Transverse colon (tissue), 4 donors: ENCODE measurements at regions of chr3 and their contacts with region 1.

Region 1: DNA sequence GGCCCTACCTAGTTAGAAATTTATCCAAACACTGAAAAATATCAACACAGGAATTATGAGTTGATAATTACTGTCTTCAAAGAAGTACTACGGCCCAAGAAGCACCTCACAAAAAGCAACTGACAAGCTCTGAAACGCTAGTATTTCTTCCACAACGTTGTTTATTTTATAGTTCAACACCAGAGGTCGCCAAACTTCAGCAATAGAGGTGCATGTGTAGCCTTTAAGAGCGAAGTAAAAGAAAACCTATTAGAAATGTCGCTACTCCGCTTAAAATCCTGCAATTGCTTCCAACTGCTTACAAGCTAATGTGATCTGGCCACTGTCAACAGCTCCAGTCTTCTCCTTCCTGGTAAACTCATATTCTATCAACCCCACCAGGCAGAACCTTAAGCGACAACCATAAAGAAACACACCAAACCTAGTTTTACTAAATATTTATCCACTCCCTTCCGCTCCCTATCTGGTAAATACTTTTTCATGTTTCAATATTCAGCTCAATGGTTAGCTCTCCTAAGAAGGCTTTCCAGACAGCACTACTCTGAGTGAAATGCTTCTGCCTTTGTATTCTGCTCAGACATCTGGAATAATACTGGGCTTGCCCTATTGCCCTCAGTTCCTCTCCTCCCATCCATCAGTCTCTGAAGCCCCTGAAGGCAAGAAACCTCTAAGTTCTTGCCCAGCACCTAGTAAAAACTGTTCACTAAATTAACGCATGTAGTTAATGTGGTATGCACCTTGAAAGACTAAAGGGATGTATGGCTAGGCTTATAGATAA is 110.2 kb downstream of the NR1I2 start:
- DNase-seq: peak; percentile 15
- H3K4me3 ChIP-seq: no peak overlapping the region
- H3K27ac ChIP-seq: peak overlapping the region in 3 of 4 donors; percentile 18 to 31 (median 23)
- H3K4me1 ChIP-seq: peaks cover 0 to 10% (median 0%) of the 10 kb centered on the region in 4 donors
- H3K27me3 ChIP-seq: no peaks in the 10 kb centered on the region
- CTCF ChIP-seq: peak; percentile 59 to 67 (median 64)
- EP300 ChIP-seq: no peak
- POLR2A ChIP-seq: no peak

Region 2: DNA sequence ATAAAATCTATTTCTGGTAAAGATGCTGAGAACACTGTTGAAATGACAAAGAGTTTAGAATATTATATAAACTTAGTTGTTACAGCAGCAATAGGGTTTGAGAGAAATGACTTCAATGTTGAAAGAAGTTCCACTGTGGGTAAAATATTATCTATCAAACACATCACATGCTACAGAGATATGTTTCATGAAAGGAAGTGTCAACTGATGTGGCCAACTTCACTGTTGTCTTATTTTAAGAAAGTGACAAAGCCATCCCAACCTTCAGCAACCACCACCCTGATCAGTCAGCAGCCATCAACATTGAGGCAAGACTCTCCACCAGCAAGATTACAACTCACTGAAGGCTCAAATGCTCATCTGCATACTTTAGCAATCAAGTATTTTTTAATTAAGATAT is 449.0 kb before region 1 on chr3:
- in situ Hi-C with region 1: no loop called
- intact Hi-C with region 1: no loop called
- DNase-seq: no peak
- H3K4me3 ChIP-seq: no peak overlapping the region
- H3K27ac ChIP-seq: no peak overlapping the region
- H3K4me1 ChIP-seq: no peaks in the 10 kb centered on the region
- H3K27me3 ChIP-seq: no peaks in the 10 kb centered on the region
- CTCF ChIP-seq: no peak
- EP300 ChIP-seq: no peak
- POLR2A ChIP-seq: no peak

Region 3: DNA sequence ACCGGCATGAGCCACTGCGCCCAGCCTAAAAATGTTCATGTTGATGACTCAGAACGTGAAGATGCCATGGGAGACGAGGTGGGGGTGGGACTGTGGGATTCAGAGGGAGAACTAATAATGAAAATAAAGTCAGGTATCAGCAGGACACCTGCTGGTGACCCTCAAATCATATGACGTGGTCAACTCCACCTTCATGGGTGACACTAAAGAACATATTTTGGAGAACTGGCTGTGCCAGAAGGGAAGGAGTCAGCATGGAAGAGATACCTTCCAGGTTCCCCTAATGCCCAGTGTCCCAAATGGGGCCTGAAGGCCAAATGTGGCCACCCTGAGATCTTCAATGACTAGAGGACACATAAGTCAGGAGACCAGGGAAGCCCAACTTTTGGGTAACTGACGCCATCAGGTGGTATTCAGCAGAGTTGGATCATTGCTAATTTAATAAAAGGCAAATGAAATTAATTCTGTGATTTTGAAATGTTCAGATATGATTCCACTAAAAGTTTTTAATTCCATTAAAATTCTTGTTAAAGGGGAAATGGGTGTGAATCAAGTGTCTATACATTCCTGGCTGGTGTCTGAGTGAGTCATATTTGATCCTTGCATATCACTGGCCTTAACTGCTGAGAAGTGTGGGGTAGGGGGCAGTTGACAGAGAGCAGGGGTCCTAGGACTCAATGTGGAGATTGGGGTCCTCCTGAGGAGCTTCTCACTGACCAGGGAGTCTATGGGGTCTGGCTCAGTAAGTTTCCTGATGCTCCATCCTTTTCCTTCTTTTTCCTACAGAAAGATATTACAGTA is 290.8 kb after region 1 on chr3:
- in situ Hi-C with region 1: loop called (anchors 10 to 25 kb)
- intact Hi-C with region 1: no loop called
- DNase-seq: no peak
- H3K4me3 ChIP-seq: no peak overlapping the region
- H3K27ac ChIP-seq: no peak overlapping the region
- H3K4me1 ChIP-seq: no peaks in the 10 kb centered on the region
- H3K27me3 ChIP-seq: no peaks in the 10 kb centered on the region
- CTCF ChIP-seq: peak in 4 of 5 experiments; percentile 11 to 28 (median 24)
- EP300 ChIP-seq: no peak
- POLR2A ChIP-seq: no peak

Region 4: GRCh38 chr3:120198305-120198878 is 306.3 kb after region 1 on chr3:
- in situ Hi-C with region 1: loop called in 3 of 4 experiments (anchors 25 kb)
- intact Hi-C with region 1: no loop called
- DNase-seq: no peak
- H3K4me3 ChIP-seq: no peak overlapping the region
- H3K27ac ChIP-seq: no peak overlapping the region
- H3K4me1 ChIP-seq: peaks cover 0 to 11% (median 0%) of the 10 kb centered on the region in 4 donors
- H3K27me3 ChIP-seq: no peaks in the 10 kb centered on the region
- CTCF ChIP-seq: peak in 2 of 5 experiments; percentile 11 to 19
- EP300 ChIP-seq: no peak
- POLR2A ChIP-seq: no peak